ENCODE measurements at regions of chr3 and their contacts with region 1.

Region 1: GRCh38 chr3:98329392-98330124 is 24.1 kb upstream of the OR5K4 start:
- DNase-seq: peak; percentile 61
- H3K4me3 Mint-ChIP-seq: no peak overlapping the region
- H3K27ac Mint-ChIP-seq: no peak overlapping the region
- H3K4me1 Mint-ChIP-seq: peaks cover 24% of the 10 kb centered on the region
- H3K27me3 Mint-ChIP-seq: peaks cover 26% of the 10 kb centered on the region

Region 2: GRCh38 chr3:98039322-98040024 is 290.1 kb before region 1 on chr3:
- CTCF ChIA-PET with region 1: interaction called, 65 read pairs
- DNase-seq: peak; percentile 84
- H3K4me3 Mint-ChIP-seq: peak overlapping the region; percentile 80
- H3K27ac Mint-ChIP-seq: peak overlapping the region; percentile 90
- H3K4me1 Mint-ChIP-seq: peaks cover 22% of the 10 kb centered on the region
- H3K27me3 Mint-ChIP-seq: peaks cover 31% of the 10 kb centered on the region

Region 3: DNA sequence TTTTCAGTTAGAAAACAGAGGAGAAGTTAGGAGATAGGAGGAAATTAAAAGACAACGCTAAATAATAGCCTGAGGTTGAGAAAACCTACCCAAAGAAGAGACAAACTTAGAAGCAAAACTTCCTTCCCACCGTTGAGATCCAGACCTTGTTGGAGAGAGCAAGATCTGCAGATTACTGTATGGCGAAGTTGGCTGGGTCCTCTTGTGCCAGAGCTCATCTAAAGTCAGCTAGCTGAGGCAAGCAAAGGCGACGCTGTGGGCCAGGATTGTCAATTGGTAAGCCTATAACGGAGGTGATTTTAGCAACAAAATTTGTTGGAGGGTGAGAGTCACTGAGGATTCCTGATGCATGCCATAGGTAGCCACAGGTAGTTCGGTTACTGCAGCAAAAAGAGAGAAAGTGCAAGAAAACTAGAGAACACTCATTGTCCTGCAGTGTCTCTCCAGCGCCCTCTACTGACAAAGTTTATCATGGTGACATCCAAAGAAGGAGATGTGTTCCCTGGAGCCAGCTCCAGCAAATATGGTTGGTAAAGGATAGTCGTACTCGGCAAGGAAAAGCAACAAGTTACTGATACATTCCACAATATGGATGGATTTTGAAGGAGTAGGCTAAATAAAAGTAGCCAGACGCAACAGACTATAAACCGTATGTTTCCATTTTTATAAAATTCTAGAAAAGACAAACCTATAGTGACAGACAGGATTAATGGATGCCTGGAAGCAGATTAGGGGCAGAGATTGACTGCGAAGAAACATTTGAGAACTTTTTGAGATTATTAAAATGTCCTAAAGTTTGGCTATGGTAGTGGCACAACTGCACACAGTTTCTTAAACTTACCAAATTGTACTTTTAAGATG is 14.3 kb after region 1 on chr3:
- CTCF ChIA-PET with region 1: interaction called, 11 read pairs
- DNase-seq: peak; percentile 35
- H3K4me3 Mint-ChIP-seq: no peak overlapping the region
- H3K27ac Mint-ChIP-seq: no peak overlapping the region
- H3K4me1 Mint-ChIP-seq: peaks cover 9% of the 10 kb centered on the region
- H3K27me3 Mint-ChIP-seq: peaks cover 32% of the 10 kb centered on the region

Measured in activated naive CD4-positive, alpha-beta T cell treated with anti-CD3 and anti-CD28 coated beads, Interleukin-2, amount 10 ng/mL, durations not matched to agents 7 days and 5 days (primary cell).